ENCODE measurements at regions of chr1 and their contacts with region 1.

Region 1: GRCh38 chr1:119859647-119860046 is 36.7 kb downstream of the ADAM30 start:
- DNase-seq: no peak
- ATAC-seq: no peak
- H3K4me3 ChIP-seq: no peak overlapping the region
- H3K27ac ChIP-seq: no peak overlapping the region
- H3K4me1 ChIP-seq: no peaks in the 10 kb centered on the region
- H3K27me3 ChIP-seq: peaks cover 20% of the 10 kb centered on the region
- CTCF ChIP-seq: no peak

Region 2: GRCh38 chr1:119626841-119627240 is 232.8 kb before region 1 on chr1:
- CTCF ChIA-PET with region 1: no interaction called
- POLR2A ChIA-PET with region 1: no interaction called
- in situ Hi-C with region 1: no loop called
- intact Hi-C with region 1: no loop called
- DNase-seq: no peak
- ATAC-seq: no peak
- H3K4me3 ChIP-seq: no peak overlapping the region
- H3K27ac ChIP-seq: no peak overlapping the region
- H3K4me1 ChIP-seq: no peaks in the 10 kb centered on the region
- H3K27me3 ChIP-seq: no peaks in the 10 kb centered on the region
- CTCF ChIP-seq: no peak

Region 3: DNA sequence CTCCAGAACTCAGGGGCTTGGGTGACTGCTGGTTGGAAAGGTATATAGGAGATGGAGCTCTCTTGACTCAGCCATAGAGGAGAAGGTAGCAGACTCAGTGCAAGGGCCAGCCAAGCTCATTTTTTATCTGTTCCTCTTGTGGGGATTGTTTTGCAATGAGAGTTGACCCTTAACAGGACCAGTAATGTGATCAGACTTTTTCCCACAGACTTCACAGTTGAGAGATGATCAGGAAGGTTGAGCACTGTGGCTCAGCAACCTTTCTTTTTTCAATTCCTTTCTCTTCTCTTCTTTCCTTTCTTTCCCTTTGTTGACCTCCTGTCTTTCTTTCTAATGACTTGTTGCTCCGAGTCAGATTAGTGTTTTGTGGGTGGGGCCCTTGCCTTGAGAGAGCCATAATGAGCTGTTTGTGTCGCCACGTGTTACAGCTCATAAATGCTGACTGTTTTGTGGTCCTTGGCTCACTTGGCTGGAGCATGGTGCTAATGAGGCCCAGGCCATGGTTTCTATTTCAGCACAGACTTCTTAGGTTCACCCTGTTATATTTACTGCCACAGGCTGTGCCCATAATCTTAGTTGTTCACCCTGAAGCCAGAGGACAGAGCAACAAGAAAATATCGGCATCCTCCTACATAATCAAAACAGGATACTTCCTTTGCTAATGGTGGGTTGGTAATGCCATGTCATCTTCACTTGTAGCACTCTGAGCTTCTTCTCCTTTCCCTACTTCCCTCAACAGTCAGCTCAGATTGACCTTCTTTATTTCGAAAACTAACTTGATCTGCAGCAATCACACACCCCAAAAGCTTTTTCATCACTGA is 22.7 kb after region 1 on chr1:
- CTCF ChIA-PET with region 1: no interaction called
- POLR2A ChIA-PET with region 1: no interaction called
- in situ Hi-C with region 1: no loop called
- intact Hi-C with region 1: no loop called
- DNase-seq: no peak
- ATAC-seq: no peak
- H3K4me3 ChIP-seq: no peak overlapping the region
- H3K27ac ChIP-seq: no peak overlapping the region
- H3K4me1 ChIP-seq: no peaks in the 10 kb centered on the region
- H3K27me3 ChIP-seq: peaks cover 44% of the 10 kb centered on the region
- CTCF ChIP-seq: no peak

Region 4: DNA sequence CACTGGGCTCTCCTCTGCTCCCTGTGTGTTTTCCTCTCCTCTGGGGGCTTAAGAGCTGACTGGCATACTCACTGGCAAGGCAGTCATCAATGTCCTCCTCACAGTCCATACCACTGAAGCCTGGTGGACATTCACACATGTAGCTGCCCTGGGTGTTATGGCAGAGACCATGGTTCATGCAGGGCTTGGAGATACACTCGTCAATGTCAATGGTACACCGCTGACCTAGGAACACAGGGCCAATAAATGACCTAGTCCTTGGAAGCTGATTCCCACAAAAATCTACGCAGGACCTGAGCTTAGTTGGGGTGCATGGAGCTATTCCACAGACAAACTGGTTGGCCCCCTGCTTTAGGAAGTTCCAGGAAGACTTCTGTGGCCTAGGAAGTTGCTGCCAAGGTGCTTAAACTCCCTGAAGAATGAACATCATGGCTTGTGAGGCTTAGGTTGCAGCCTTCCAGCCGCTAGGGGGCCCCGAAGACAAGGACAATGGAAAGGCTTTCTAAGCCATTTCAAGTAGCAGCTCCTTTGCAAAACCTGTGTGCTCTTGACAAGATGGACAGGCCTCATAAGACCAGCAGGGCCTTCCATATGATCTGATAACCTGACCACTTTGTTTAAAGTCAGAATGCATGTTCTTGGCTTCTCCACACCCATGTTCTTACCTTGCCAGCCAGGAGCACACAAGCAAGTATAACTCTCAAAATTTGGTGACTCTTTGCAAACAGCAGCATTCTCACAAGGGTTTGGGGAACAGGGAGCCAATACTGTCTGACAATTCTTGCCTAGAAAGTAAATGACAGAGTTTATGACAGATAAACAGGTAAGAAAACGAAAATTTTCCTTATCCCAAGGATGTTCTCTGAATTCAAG is 88.9 kb after region 1 on chr1:
- CTCF ChIA-PET with region 1: no interaction called
- POLR2A ChIA-PET with region 1: no interaction called
- in situ Hi-C with region 1: no loop called
- intact Hi-C with region 1: loop called (anchors 10 kb)
- DNase-seq: peak; percentile 61
- ATAC-seq: peak; percentile 96
- H3K4me3 ChIP-seq: no peak overlapping the region
- H3K27ac ChIP-seq: no peak overlapping the region
- H3K4me1 ChIP-seq: no peaks in the 10 kb centered on the region
- H3K27me3 ChIP-seq: no peaks in the 10 kb centered on the region
- CTCF ChIP-seq: peak; percentile 97

Measured in Panc1 (cell line).